Esophagus muscularis mucosa (tissue), 4 donors: ENCODE measurements at regions of chr15 and their contacts with region 1.

Region 1: GRCh38 chr15:90463381-90463780 is 66.3 kb upstream of the CRTC3 start:
- DNase-seq: no peak
- H3K4me3 ChIP-seq: no peak overlapping the region
- H3K27ac ChIP-seq: peak overlapping the region; percentile 35 to 78 (median 68)
- H3K4me1 ChIP-seq: peaks cover 43 to 76% (median 61%) of the 10 kb centered on the region in 4 donors
- H3K27me3 ChIP-seq: no peaks in the 10 kb centered on the region
- CTCF ChIP-seq: peak in 2 of 3 experiments; percentile 14 to 39
- EP300 ChIP-seq: no peak
- POLR2A ChIP-seq: no peak

Region 2: GRCh38 chr15:90425726-90426346 is 37.5 kb before region 1 on chr15:
- intact Hi-C with region 1: loop called (anchors 5 kb)
- DNase-seq: no peak
- H3K4me3 ChIP-seq: no peak overlapping the region
- H3K27ac ChIP-seq: peak overlapping the region in 3 of 4 donors; percentile 14 to 30 (median 28)
- H3K4me1 ChIP-seq: peaks cover 49 to 59% (median 55%) of the 10 kb centered on the region in 4 donors
- H3K27me3 ChIP-seq: no peaks in the 10 kb centered on the region
- CTCF ChIP-seq: no peak
- EP300 ChIP-seq: no peak
- POLR2A ChIP-seq: no peak

Region 3: GRCh38 chr15:90519688-90520087 is 56.3 kb after region 1 on chr15:
- intact Hi-C with region 1: no loop called
- DNase-seq: no peak
- H3K4me3 ChIP-seq: no peak overlapping the region
- H3K27ac ChIP-seq: no peak overlapping the region
- H3K4me1 ChIP-seq: peaks cover 0 to 5% (median 0%) of the 10 kb centered on the region in 4 donors
- H3K27me3 ChIP-seq: no peaks in the 10 kb centered on the region
- CTCF ChIP-seq: no peak
- EP300 ChIP-seq: no peak
- POLR2A ChIP-seq: no peak

Region 4: DNA sequence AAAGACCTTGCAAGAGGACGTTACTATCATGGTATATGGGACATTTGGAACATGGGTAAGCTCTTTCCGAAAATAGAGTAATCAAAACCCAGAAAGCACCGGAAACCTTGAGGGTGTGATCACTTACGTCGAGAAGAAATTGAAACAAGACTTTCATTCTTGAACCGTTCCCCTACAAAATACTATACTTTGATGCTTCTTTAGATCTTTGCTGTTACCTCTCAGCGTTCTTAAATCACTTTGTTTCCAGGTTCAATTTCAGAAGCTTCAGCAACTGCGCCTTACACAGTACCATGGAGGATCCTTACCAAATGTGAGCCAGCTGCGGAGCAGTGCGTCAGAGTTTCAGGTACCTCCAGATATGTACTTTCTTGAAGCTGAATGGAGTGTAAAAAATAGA is 76.4 kb after region 1 on chr15:
- intact Hi-C with region 1: no loop called
- DNase-seq: no peak
- H3K4me3 ChIP-seq: no peak overlapping the region
- H3K27ac ChIP-seq: no peak overlapping the region
- H3K4me1 ChIP-seq: peaks cover 34 to 46% (median 43%) of the 10 kb centered on the region in 4 donors
- H3K27me3 ChIP-seq: no peaks in the 10 kb centered on the region
- CTCF ChIP-seq: no peak
- EP300 ChIP-seq: no peak
- POLR2A ChIP-seq: no peak